ENCODE measurements at regions of chr13 and their contacts with region 1.

Region 1: GRCh38 chr13:40613192-40613818 is 53.1 kb downstream of the FOXO1 start:
- DNase-seq: no peak
- H3K4me3 Mint-ChIP-seq: no peak overlapping the region
- H3K27ac Mint-ChIP-seq: no peak overlapping the region
- H3K4me1 Mint-ChIP-seq: no peaks in the 10 kb centered on the region
- H3K27me3 Mint-ChIP-seq: no peaks in the 10 kb centered on the region
- CTCF ChIP-seq: no peak

Region 2: DNA sequence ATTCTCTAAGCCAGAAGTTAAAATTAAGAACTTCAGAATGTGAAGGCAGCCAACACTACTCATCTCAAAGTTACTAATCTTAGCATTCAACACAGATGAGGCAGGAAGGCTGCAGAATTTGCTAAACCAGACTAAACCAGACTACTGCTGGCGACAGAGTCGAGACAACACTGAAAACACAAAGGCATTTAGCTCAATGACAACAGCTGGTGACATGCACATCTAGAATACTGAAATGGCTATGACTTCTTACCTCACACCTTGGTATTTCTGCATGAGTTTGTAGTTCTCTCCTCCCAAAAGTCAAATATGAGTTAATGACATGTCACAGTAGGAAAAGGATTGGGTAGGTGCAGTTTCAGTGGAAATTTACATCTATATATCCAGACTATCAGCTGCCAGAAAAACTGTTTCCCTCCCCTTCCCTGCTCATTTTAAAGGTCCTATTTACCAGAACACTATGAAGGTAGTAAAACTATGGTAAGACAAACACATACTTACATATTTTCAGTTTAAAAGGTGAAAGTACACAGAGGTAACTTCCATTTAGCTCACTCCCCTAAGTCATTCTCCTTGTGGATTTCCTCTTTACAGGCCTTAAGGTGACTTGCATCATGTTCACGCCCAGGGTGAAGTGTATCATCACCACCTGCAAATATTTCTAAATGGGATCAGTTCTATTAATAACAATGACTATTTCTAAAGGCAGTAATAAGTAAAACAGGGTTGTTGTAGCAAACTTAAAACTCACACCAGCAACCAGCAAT is 31.7 kb after region 1 on chr13:
- CTCF ChIA-PET with region 1: no interaction called
- intact Hi-C with region 1: loop called (anchors 5 kb)
- DNase-seq: no peak
- H3K4me3 Mint-ChIP-seq: no peak overlapping the region
- H3K27ac Mint-ChIP-seq: no peak overlapping the region
- H3K4me1 Mint-ChIP-seq: peaks cover 9% of the 10 kb centered on the region
- H3K27me3 Mint-ChIP-seq: no peaks in the 10 kb centered on the region
- CTCF ChIP-seq: no peak

Region 3: GRCh38 chr13:40664100-40664998 is 51.0 kb after region 1 on chr13:
- CTCF ChIA-PET with region 1: no interaction called
- intact Hi-C with region 1: loop called (anchors 5 kb)
- DNase-seq: peak; percentile 70
- H3K4me3 Mint-ChIP-seq: peak overlapping the region; percentile 95
- H3K27ac Mint-ChIP-seq: peak overlapping the region; percentile 68
- H3K4me1 Mint-ChIP-seq: no peaks in the 10 kb centered on the region
- H3K27me3 Mint-ChIP-seq: no peaks in the 10 kb centered on the region
- CTCF ChIP-seq: no peak

Region 4: DNA sequence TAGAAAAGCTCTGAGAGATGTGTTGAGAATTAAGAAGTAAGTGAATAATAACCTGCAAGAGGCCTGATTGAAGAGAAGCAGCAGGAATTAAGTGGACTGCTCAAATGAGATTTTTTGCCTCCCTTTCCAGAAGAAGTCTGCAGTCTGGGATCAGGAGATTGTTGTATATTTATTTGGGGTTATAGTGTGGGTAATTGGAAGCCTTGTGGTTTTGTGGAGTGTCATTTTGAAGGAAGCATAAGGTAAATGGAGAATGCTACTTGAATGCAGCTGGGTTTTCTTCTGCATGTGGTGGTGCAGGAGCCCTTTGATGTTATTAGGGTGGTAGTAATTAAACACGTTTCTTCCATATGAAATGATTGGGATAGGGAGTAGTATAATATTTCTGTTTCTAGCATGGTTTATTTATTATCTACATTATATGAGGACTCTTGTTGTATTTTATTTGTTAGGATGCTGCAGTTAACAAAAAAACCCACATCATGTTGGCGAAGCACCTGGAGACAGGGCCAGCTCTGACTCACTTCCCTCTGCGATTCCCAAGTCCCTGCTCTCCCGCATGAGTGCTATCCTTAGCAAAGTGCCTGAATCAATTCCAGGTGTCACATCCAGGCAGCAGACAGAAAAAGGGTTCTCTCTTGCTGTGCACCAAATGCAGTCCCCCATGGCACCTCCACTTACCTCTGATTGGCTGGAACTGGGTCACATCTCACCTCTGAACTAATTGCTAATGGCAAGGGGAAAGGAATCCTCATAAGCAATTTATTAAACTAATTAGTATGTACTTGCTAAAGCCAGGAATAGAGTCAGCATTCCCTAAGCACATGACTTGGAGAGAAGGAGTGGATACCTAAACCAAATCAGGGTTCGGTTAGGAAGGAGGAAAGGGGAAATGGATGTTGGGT is 1489.9 kb after region 1 on chr13:
- CTCF ChIA-PET with region 1: no interaction called
- intact Hi-C with region 1: no loop called
- DNase-seq: no peak
- H3K4me3 Mint-ChIP-seq: no peak overlapping the region
- H3K27ac Mint-ChIP-seq: no peak overlapping the region
- H3K4me1 Mint-ChIP-seq: peaks cover 49% of the 10 kb centered on the region
- H3K27me3 Mint-ChIP-seq: no peaks in the 10 kb centered on the region
- CTCF ChIP-seq: no peak

Measured in Calu3 (cell line).